ENCODE measurements at regions of chr20 and their contacts with region 1.

Region 1: DNA sequence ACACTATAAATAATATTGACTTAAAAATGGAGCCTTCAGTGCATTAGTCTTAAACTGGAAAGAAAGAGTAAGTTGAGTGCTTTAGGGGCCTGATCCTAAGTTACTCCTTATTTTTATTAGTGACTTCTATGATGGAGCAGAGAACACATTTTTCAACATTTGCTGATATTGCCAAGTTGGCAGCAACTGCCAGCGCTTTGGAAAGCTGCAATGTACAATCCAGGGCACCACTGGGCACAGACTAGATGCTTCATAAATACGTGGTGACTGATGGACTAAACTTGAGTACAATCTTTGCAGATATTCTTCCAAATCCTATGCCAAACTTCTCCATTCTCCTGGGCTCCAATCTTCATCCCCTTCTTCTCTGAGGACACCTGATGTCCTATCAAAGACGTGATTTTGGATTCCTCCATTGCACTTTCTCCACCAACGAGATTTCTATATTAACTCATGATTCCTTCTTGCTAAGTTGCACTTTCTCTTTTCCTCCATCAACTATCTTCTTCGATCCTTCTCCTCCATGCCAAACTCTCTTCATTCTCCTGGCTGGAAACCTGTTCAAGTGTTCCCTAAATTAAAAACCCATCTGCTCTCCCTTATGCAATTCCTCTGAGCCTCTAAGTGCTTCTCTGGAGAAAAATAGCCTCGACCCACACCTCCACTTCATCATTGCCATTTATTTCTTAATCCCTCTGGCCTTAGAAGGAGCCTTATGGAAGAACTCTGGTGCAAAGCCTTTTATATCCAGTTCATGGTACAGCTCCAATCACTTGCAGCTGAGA is 28.5 kb upstream of the PAK5 start:
- DNase-seq: no peak
- H3K4me3 ChIP-seq: no peak overlapping the region
- H3K4me3 Mint-ChIP-seq: no peak overlapping the region
- H3K27ac Mint-ChIP-seq: no peak overlapping the region
- H3K4me1 ChIP-seq: no peaks in the 10 kb centered on the region
- H3K4me1 Mint-ChIP-seq: no peaks in the 10 kb centered on the region
- H3K27me3 ChIP-seq: no peaks in the 10 kb centered on the region
- H3K27me3 Mint-ChIP-seq: peaks cover 8% of the 10 kb centered on the region
- CTCF ChIP-seq: no peak

Region 2: GRCh38 chr20:9852566-9852965 is 14.8 kb before region 1 on chr20:
- CTCF ChIA-PET with region 1: no interaction called
- POLR2A ChIA-PET with region 1: no interaction called
- intact Hi-C with region 1: loop called (anchors 1 kb)
- DNase-seq: no peak
- H3K4me3 ChIP-seq: no peak overlapping the region
- H3K4me3 Mint-ChIP-seq: no peak overlapping the region
- H3K27ac Mint-ChIP-seq: no peak overlapping the region
- H3K4me1 ChIP-seq: no peaks in the 10 kb centered on the region
- H3K4me1 Mint-ChIP-seq: no peaks in the 10 kb centered on the region
- H3K27me3 ChIP-seq: no peaks in the 10 kb centered on the region
- H3K27me3 Mint-ChIP-seq: peaks cover 18% of the 10 kb centered on the region
- CTCF ChIP-seq: no peak

Region 3: GRCh38 chr20:9919271-9920014 is 52.1 kb after region 1 on chr20:
- CTCF ChIA-PET with region 1: no interaction called
- POLR2A ChIA-PET with region 1: no interaction called
- intact Hi-C with region 1: no loop called
- DNase-seq: no peak
- H3K4me3 ChIP-seq: no peak overlapping the region
- H3K4me3 Mint-ChIP-seq: no peak overlapping the region
- H3K27ac Mint-ChIP-seq: no peak overlapping the region
- H3K4me1 ChIP-seq: no peaks in the 10 kb centered on the region
- H3K4me1 Mint-ChIP-seq: no peaks in the 10 kb centered on the region
- H3K27me3 ChIP-seq: no peaks in the 10 kb centered on the region
- H3K27me3 Mint-ChIP-seq: peaks cover 15% of the 10 kb centered on the region
- CTCF ChIP-seq: no peak

Measured in Caco-2 (cell line).